HepG2 (cell line): ENCODE measurements at regions of chr13 and their contacts with region 1.

Region 1: GRCh38 chr13:26707122-26708006 is 53.2 kb downstream of the GPR12 start:
- DNase-seq: peak; percentile 50
- ATAC-seq: peak; percentile 93
- H3K4me3 ChIP-seq: no peak overlapping the region
- H3K27ac ChIP-seq: no peak overlapping the region
- H3K4me1 ChIP-seq: no peaks in the 10 kb centered on the region
- H3K27me3 ChIP-seq: peaks cover 0 to 4% of the 10 kb centered on the region in 2 experiments; a peak in 3 of 5 replicates
- CTCF ChIP-seq: peak; percentile 72
- EP300 ChIP-seq: no peak
- POLR2A ChIP-seq: no peak
- RAD21 ChIP-seq: peak; percentile 52

Region 2: GRCh38 chr13:26872525-26873385 is 165.4 kb after region 1 on chr13:
- CTCF ChIA-PET with region 1: interaction called, 10 read pairs
- POLR2A ChIA-PET with region 1: no interaction called
- in situ Hi-C with region 1: loop called (anchors 5 kb)
- intact Hi-C with region 1: loop called (anchors 1 kb)
- DNase-seq: peak; percentile 31
- ATAC-seq: peak; percentile 96
- H3K4me3 ChIP-seq: no peak overlapping the region
- H3K27ac ChIP-seq: no peak overlapping the region
- H3K4me1 ChIP-seq: no peaks in the 10 kb centered on the region
- H3K27me3 ChIP-seq: no peaks in the 10 kb centered on the region
- CTCF ChIP-seq: peak; percentile 85
- EP300 ChIP-seq: no peak
- POLR2A ChIP-seq: no peak
- RAD21 ChIP-seq: peak; percentile 53

Region 3: GRCh38 chr13:26929971-26930730 is 222.8 kb after region 1 on chr13:
- CTCF ChIA-PET with region 1: interaction called, 10 read pairs
- POLR2A ChIA-PET with region 1: no interaction called
- in situ Hi-C with region 1: loop called (anchors 5 kb)
- intact Hi-C with region 1: loop called (anchors 1 kb)
- DNase-seq: peak; percentile 39
- ATAC-seq: peak; percentile 86
- H3K4me3 ChIP-seq: no peak overlapping the region
- H3K27ac ChIP-seq: no peak overlapping the region
- H3K4me1 ChIP-seq: peaks cover 8% of the 10 kb centered on the region; the same call in 1 of the 2 replicates
- H3K27me3 ChIP-seq: peaks cover 1 to 30% of the 10 kb centered on the region in 2 experiments; a peak in 3 of 5 replicates
- CTCF ChIP-seq: peak; percentile 83
- EP300 ChIP-seq: no peak
- POLR2A ChIP-seq: no peak
- RAD21 ChIP-seq: peak; percentile 49; the same call in 1 of the 2 replicates